ENCODE measurements at regions of chr3 and their contacts with region 1.

Region 1: GRCh38 chr3:43477600-43477999 is 144.2 kb downstream of the ANO10 start:
- DNase-seq: peak; percentile 47 to 94 (median 77)
- ATAC-seq: peak; percentile 97
- H3K4me3 ChIP-seq: no peak overlapping the region
- H3K4me3 Mint-ChIP-seq: peak overlapping the region; percentile 9
- H3K27ac ChIP-seq: peak overlapping the region; percentile 83 to 97
- H3K27ac Mint-ChIP-seq: peak overlapping the region; percentile 97
- H3K4me1 ChIP-seq: peaks cover 42% of the 10 kb centered on the region
- H3K4me1 Mint-ChIP-seq: peaks cover 65% of the 10 kb centered on the region
- H3K27me3 ChIP-seq: no peaks in the 10 kb centered on the region
- H3K27me3 Mint-ChIP-seq: no peaks in the 10 kb centered on the region
- CTCF ChIP-seq: no peak

Region 2: DNA sequence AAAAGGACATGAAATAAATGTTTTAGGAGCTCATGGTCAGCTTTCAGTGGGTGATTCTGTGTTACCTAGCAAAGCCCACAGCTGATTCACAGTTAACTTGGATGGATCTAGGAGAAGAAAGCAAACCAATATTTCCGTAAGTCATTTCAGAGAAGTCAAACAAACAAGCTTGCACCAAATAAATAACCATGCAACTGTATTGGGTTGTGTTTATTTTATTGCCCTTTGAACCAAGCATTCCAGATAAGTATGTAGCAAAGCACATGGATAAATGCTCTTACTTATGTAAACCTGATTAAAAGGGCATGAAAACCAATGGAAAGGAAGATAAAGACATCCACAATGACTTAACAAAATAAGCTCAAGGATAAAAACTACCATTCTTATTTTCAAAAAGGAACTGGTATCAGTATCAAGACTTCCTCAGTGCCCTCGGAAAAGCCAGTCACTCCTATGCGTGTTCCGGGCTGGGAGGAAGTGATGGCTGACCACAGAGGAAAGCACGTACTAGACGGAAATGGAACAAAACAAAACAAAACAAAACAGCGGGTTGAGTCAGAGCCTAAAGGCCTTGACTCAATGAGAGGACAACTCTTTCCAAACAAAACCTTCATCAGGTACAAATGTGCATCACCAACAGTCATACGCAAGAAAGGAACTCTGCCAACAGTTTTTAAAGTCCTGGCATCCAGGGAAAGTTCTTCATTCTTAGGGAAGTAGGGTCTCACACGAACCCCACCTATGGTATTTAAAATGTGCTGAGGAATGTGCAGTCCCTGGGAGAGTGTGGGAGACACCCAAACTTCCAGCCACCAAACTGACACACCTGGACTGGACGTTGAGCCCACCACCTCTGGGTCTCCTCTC is 88.0 kb before region 1 on chr3:
- CTCF ChIA-PET with region 1: no interaction called
- POLR2A ChIA-PET with region 1: interaction called, 11 read pairs
- intact Hi-C with region 1: loop called (anchors 1 to 2 kb)
- DNase-seq: peak; percentile 40 to 93 (median 74)
- ATAC-seq: peak; percentile 89
- H3K4me3 ChIP-seq: peak overlapping the region in 1 of 2 experiments; percentile 21
- H3K4me3 Mint-ChIP-seq: peak overlapping the region; percentile 50
- H3K27ac ChIP-seq: peak overlapping the region; percentile 45 to 85
- H3K27ac Mint-ChIP-seq: peak overlapping the region; percentile 92
- H3K4me1 ChIP-seq: peaks cover 32% of the 10 kb centered on the region
- H3K4me1 Mint-ChIP-seq: peaks cover 80% of the 10 kb centered on the region
- H3K27me3 ChIP-seq: no peaks in the 10 kb centered on the region
- H3K27me3 Mint-ChIP-seq: no peaks in the 10 kb centered on the region
- CTCF ChIP-seq: no peak

Region 3: GRCh38 chr3:43497905-43498365 is 20.3 kb after region 1 on chr3:
- CTCF ChIA-PET with region 1: interaction called, 9 read pairs
- POLR2A ChIA-PET with region 1: interaction called, 3 read pairs
- intact Hi-C with region 1: loop called in 1 of 2 experiments (anchors 2 kb)
- DNase-seq: no peak
- ATAC-seq: no peak
- H3K4me3 ChIP-seq: no peak overlapping the region
- H3K4me3 Mint-ChIP-seq: no peak overlapping the region
- H3K27ac ChIP-seq: no peak overlapping the region
- H3K27ac Mint-ChIP-seq: peak overlapping the region; percentile 57
- H3K4me1 ChIP-seq: peaks cover 36% of the 10 kb centered on the region
- H3K4me1 Mint-ChIP-seq: peaks cover 55% of the 10 kb centered on the region
- H3K27me3 ChIP-seq: no peaks in the 10 kb centered on the region
- H3K27me3 Mint-ChIP-seq: no peaks in the 10 kb centered on the region
- CTCF ChIP-seq: no peak

Region 4: GRCh38 chr3:43690400-43691119 is 213.0 kb after region 1 on chr3 and contains the start of gene ABHD5:
- CTCF ChIA-PET with region 1: no interaction called
- POLR2A ChIA-PET with region 1: no interaction called
- intact Hi-C with region 1: loop called in 1 of 2 experiments (anchors 5 kb)
- DNase-seq: peak; percentile 93 to 99 (median 96)
- ATAC-seq: peak; percentile 90
- H3K4me3 ChIP-seq: peak within 1 kb of the TSS; percentile 72 to 77
- H3K4me3 Mint-ChIP-seq: peak within 1 kb of the TSS; percentile 91
- H3K27ac ChIP-seq: peak within 1 kb of the TSS; percentile 62 to 83
- H3K27ac Mint-ChIP-seq: peak within 1 kb of the TSS; percentile 91
- H3K4me1 ChIP-seq: peaks cover 15% of the 10 kb centered on the region
- H3K4me1 Mint-ChIP-seq: peaks cover 32% of the 10 kb centered on the region
- H3K27me3 ChIP-seq: no peaks in the 10 kb centered on the region
- H3K27me3 Mint-ChIP-seq: no peaks in the 10 kb centered on the region
- CTCF ChIP-seq: peak; percentile 44
- total RNA-seq, gene ABHD5: 10.3 to 11.4 TPM